GM23248 (cell line): ENCODE measurements at regions of chr15 and their contacts with region 1.

Region 1: DNA sequence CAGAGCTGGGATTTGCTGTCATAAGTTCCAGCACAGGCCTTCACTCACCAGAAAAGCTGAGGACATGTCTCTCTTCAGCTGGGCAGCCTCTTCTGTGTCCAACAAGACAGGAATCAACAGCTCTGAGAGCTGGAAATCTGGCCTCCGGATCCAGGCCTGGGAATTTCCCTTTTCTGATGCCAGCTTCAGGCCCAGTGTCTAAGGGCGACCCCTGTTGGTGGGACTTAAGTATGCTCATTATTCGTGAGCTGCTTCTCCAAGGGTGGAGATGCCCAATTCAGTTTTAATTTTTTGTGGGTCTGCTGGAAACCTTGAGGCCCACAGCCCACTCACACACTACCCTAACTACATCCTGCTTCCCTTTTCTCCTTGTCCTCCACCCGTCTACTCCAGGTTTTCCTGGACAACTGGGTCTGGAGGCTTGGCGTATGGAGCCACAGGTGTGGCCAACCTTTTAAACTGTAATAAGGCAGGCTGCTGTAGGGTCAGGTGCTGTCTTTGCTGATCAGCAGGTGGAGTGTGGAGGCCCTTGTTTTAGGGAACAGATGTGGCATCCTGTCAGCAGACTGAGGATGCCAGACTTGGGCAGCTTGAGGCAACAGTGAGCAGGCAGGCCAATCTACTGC is 2.6 kb upstream of the CEMIP start:
- DNase-seq: peak; percentile 81
- H3K4me3 ChIP-seq: no peak overlapping the region
- H3K27ac ChIP-seq: peak overlapping the region; percentile 76
- H3K4me1 ChIP-seq: peaks cover 34% of the 10 kb centered on the region
- H3K27me3 ChIP-seq: no peaks in the 10 kb centered on the region

Region 2: GRCh38 chr15:80455668-80456442 is 320.7 kb before region 1 on chr15:
- in situ Hi-C with region 1: loop called (anchors 5 kb)
- DNase-seq: peak; percentile 96
- H3K4me3 ChIP-seq: no peak overlapping the region
- H3K27ac ChIP-seq: peak overlapping the region; percentile 61
- H3K4me1 ChIP-seq: peaks cover 29% of the 10 kb centered on the region
- H3K27me3 ChIP-seq: no peaks in the 10 kb centered on the region

Region 3: GRCh38 chr15:81054236-81054635 is 277.7 kb after region 1 on chr15:
- in situ Hi-C with region 1: no loop called
- DNase-seq: peak; percentile 76
- H3K4me3 ChIP-seq: no peak overlapping the region
- H3K27ac ChIP-seq: no peak overlapping the region
- H3K4me1 ChIP-seq: peaks cover 8% of the 10 kb centered on the region
- H3K27me3 ChIP-seq: no peaks in the 10 kb centered on the region